ENCODE measurements at regions of chr1 and their contacts with region 1.

Region 1: DNA sequence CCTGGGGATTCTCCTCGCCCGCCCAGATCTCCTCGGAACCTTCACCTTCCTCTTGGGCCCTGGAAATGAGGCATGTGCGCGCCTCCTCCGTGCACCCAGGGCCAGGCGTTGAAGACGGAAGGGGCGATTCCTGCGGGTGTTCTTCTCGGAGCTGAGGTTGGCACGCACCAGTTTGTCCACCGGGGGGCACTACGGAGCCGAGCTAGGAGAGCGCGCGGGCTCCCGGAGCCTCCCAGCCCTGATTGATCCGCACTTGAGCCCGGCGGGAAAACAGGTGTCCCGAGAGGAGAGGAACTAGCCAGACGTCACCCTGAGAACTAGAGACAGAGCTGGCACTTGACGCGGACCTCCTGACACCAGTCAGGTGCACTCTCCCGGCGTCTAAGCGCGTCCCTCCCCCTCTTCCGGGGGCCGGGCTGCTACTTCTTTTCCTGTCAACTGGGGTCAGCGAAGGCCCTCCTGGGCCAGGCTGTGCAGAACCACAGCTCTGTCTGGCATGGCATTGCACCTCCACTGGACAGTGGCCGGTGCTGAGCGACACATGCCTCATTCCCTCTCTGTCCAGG is 18.3 kb upstream of the SERINC2 start:
- DNase-seq: peak; percentile 87
- H3K4me3 Mint-ChIP-seq: peak overlapping the region; percentile 75
- H3K27ac Mint-ChIP-seq: no peak overlapping the region
- H3K4me1 Mint-ChIP-seq: peaks cover 8% of the 10 kb centered on the region
- H3K27me3 Mint-ChIP-seq: peaks cover 4% of the 10 kb centered on the region

Region 2: DNA sequence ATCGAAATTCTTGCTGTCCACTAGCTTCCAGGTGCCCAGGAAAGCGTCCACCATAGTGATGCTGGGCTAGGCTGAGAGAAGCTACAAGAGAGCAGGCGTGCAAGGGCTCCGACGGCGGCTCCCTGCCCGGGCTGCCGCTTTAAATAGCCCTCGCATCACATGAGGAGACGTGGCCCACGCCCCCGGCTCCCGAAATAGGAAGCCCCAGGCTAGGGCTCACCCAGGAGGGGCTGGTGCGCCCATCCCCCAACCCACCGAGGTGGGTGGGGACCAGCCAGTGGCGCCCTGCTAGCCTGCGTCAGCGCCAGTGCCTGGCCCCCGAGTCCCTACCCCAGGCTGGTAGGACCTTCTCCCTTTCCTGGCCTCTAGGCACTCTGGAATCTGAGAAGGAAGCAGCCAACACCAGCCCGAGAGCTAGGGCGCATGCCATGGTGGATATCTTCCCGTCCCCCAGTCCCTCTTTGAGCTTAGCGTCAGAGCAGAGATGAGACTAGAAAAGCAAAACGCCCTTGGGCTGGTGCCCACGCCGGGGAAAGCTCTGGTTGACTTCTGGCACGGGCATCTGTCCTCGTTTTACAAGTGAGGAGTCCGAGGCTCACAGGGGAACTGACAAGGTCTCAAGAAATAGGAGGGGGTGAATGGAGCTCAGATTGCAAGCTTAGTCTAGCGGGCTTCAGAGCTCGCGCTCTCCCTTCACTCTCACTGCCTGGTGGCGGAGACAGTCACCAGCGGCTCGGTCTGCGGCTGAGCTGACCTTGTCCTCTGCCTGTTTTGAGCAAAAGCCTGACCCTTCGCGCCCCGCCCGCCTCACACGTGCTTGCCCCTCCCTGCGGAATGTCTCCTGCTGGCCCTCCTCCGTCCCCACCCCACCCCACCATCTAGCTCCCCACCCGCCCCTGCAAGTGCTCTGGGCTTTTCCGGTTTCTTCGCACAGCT is 21.5 kb before region 1 on chr1 and contains the start of gene FABP3:
- CTCF ChIA-PET with region 1: interaction called, 20 read pairs
- POLR2A ChIA-PET with region 1: interaction called, 4 read pairs
- intact Hi-C with region 1: no loop called
- DNase-seq: peak; percentile 33
- H3K4me3 Mint-ChIP-seq: peak within 1 kb of the TSS; percentile 49
- H3K27ac Mint-ChIP-seq: no peak within 1 kb of the TSS
- H3K4me1 Mint-ChIP-seq: peaks cover 12% of the 10 kb centered on the region
- H3K27me3 Mint-ChIP-seq: peaks cover 3% of the 10 kb centered on the region
- total RNA-seq, gene FABP3: not detected

Region 3: GRCh38 chr1:31382379-31382989 is 12.2 kb before region 1 on chr1:
- CTCF ChIA-PET with region 1: interaction called, 14 read pairs
- POLR2A ChIA-PET with region 1: no interaction called
- intact Hi-C with region 1: no loop called
- DNase-seq: no peak
- H3K4me3 Mint-ChIP-seq: no peak overlapping the region
- H3K27ac Mint-ChIP-seq: no peak overlapping the region
- H3K4me1 Mint-ChIP-seq: no peaks in the 10 kb centered on the region
- H3K27me3 Mint-ChIP-seq: peaks cover 28% of the 10 kb centered on the region

Region 4: GRCh38 chr1:31413405-31414125 is 18.9 kb after region 1 on chr1:
- CTCF ChIA-PET with region 1: interaction called, 75 read pairs
- POLR2A ChIA-PET with region 1: no interaction called
- intact Hi-C with region 1: no loop called
- DNase-seq: peak; percentile 15
- H3K4me3 Mint-ChIP-seq: peak overlapping the region; percentile 62
- H3K27ac Mint-ChIP-seq: no peak overlapping the region
- H3K4me1 Mint-ChIP-seq: peaks cover 6% of the 10 kb centered on the region
- H3K27me3 Mint-ChIP-seq: peaks cover 54% of the 10 kb centered on the region

Region 5: DNA sequence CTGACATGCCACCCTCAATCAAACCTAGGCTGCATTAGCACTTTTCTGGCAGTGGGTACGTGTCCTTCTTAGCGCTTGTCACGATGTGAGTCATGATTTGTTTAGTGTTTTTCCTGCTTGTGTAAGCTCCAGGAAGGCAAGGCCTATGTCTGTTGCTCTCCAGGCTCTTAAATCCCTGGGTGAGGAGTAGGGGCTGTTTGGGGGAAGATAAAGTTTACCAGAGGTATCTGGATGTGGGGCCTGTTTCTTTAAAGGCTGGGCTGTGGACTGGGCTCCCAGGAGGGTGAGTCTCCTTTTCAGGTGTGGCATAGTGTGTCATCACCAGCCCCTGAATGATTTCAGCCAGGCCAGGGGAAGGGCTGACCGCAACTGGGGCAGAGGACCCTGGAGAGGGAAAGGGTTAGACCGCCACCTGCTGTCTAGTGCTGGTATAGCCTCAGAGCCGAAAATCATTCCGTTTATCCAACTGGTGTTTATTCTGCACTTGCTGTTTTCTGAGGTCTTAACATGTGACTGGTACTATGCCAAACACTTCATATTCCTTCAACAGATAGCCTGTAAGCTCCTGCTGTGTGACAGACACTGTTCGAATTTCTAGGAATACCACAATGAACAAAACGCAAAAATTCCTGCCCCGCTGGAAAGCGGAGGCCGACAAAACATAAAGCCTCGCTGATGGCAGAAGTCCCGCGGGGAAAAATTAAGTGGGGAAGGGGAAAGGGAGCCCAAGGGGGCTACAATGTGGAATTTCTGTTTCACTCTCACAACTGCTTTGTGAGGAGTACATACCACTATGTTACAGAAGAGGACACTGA is 28.0 kb after region 1 on chr1:
- CTCF ChIA-PET with region 1: interaction called, 75 read pairs
- POLR2A ChIA-PET with region 1: no interaction called
- intact Hi-C with region 1: loop called (anchors 1 kb)
- DNase-seq: peak; percentile 79
- H3K4me3 Mint-ChIP-seq: no peak overlapping the region
- H3K27ac Mint-ChIP-seq: no peak overlapping the region
- H3K4me1 Mint-ChIP-seq: no peaks in the 10 kb centered on the region
- H3K27me3 Mint-ChIP-seq: peaks cover 23% of the 10 kb centered on the region